ENCODE measurements at regions of chr13 and their contacts with region 1.

Region 1: GRCh38 chr13:41061075-41061913 is at the start of gene WBP4:
- DNase-seq: peak; percentile 94
- H3K4me3 ChIP-seq: peak within 1 kb of the TSS; percentile 77 to 82
- H3K27ac ChIP-seq: peak within 1 kb of the TSS; percentile 97 to 98
- H3K4me1 ChIP-seq: peaks cover 11% of the 10 kb centered on the region
- H3K27me3 ChIP-seq: no peaks in the 10 kb centered on the region
- CTCF ChIP-seq: peak in 1 of 4 experiments; percentile 36
- POLR2A ChIP-seq: peak; percentile 48
- total RNA-seq, gene WBP4: 13.3 to 14.1 TPM

Region 2: GRCh38 chr13:41244556-41244955 is 183.3 kb after region 1 on chr13:
- intact Hi-C with region 1: loop called (anchors 5 kb)
- DNase-seq: no peak
- H3K4me3 ChIP-seq: no peak overlapping the region
- H3K27ac ChIP-seq: peak overlapping the region; percentile 7 to 40
- H3K4me1 ChIP-seq: no peaks in the 10 kb centered on the region
- H3K27me3 ChIP-seq: no peaks in the 10 kb centered on the region
- CTCF ChIP-seq: no peak
- POLR2A ChIP-seq: no peak

Region 3: GRCh38 chr13:41310963-41311606 is 249.8 kb after region 1 on chr13 and contains the start of gene NAA16:
- intact Hi-C with region 1: loop called (anchors 5 kb)
- DNase-seq: peak; percentile 73
- H3K4me3 ChIP-seq: peak within 1 kb of the TSS; percentile 70 to 76
- H3K27ac ChIP-seq: peak within 1 kb of the TSS; percentile 93 to 97
- H3K4me1 ChIP-seq: no peaks in the 10 kb centered on the region
- H3K27me3 ChIP-seq: no peaks in the 10 kb centered on the region
- CTCF ChIP-seq: peak in 2 of 4 experiments; percentile 25 to 38
- POLR2A ChIP-seq: peak; percentile 75
- total RNA-seq, gene NAA16: 17.6 to 19.9 TPM

Region 4: GRCh38 chr13:41652727-41653361 is 591.5 kb after region 1 on chr13:
- intact Hi-C with region 1: loop called (anchors 10 kb)
- DNase-seq: peak; percentile 30
- H3K4me3 ChIP-seq: no peak overlapping the region
- H3K27ac ChIP-seq: peak overlapping the region in 1 of 2 donors; percentile 46
- H3K4me1 ChIP-seq: no peaks in the 10 kb centered on the region
- H3K27me3 ChIP-seq: no peaks in the 10 kb centered on the region
- CTCF ChIP-seq: peak in 3 of 4 experiments; percentile 49 to 89 (median 85)
- POLR2A ChIP-seq: no peak

Measured in prostate gland (tissue), 2 donors.